HCT116 (cell line): ENCODE measurements at regions of chr17 and their contacts with region 1.

Region 1: GRCh38 chr17:76681222-76682137 is 29.3 kb downstream of the MXRA7 start:
- DNase-seq: peak; percentile 56
- ATAC-seq: peak; percentile 89
- H3K4me3 ChIP-seq: no peak overlapping the region
- H3K27ac ChIP-seq: no peak overlapping the region
- H3K4me1 ChIP-seq: no peaks in the 10 kb centered on the region
- H3K27me3 ChIP-seq: no peaks in the 10 kb centered on the region
- CTCF ChIP-seq: peak; percentile 90 to 99 (median 96)
- POLR2A ChIP-seq: no peak
- RAD21 ChIP-seq: peak; percentile 91

Region 2: GRCh38 chr17:76567634-76568432 is 113.6 kb before region 1 on chr17:
- CTCF ChIA-PET with region 1: interaction called, 10 read pairs
- POLR2A ChIA-PET with region 1: no interaction called
- RAD21 ChIA-PET with region 1: no interaction called
- intact Hi-C with region 1: no loop called
- DNase-seq: no peak
- ATAC-seq: peak; percentile 18
- H3K4me3 ChIP-seq: no peak overlapping the region
- H3K27ac ChIP-seq: no peak overlapping the region; the same call in 1 of the 2 replicates
- H3K4me1 ChIP-seq: peaks cover 0 to 25% of the 10 kb centered on the region in 2 experiments; a peak in 1 of 4 replicates
- H3K27me3 ChIP-seq: no peaks in the 10 kb centered on the region
- CTCF ChIP-seq: no peak
- POLR2A ChIP-seq: no peak
- RAD21 ChIP-seq: no peak

Region 3: GRCh38 chr17:76671123-76671911 is 10.2 kb before region 1 on chr17:
- CTCF ChIA-PET with region 1: interaction called, 33 read pairs
- POLR2A ChIA-PET with region 1: interaction called, 17 read pairs
- RAD21 ChIA-PET with region 1: interaction called in 1 of 2 experiments, 4 read pairs
- intact Hi-C with region 1: no loop called
- DNase-seq: peak; percentile 100
- ATAC-seq: peak; percentile 97
- H3K4me3 ChIP-seq: peak overlapping the region; percentile 80 to 82
- H3K27ac ChIP-seq: peak overlapping the region; percentile 79
- H3K4me1 ChIP-seq: peaks cover 21% of the 10 kb centered on the region in 2 experiments
- H3K27me3 ChIP-seq: no peaks in the 10 kb centered on the region
- CTCF ChIP-seq: no peak
- POLR2A ChIP-seq: peak; percentile 64
- RAD21 ChIP-seq: no peak

Region 4: GRCh38 chr17:76714822-76715495 is 33.5 kb after region 1 on chr17:
- CTCF ChIA-PET with region 1: interaction called, 12 read pairs
- POLR2A ChIA-PET with region 1: no interaction called
- RAD21 ChIA-PET with region 1: no interaction called
- intact Hi-C with region 1: no loop called
- DNase-seq: no peak
- ATAC-seq: peak; percentile 28
- H3K4me3 ChIP-seq: no peak overlapping the region
- H3K27ac ChIP-seq: 0 out of 2 replicates have a peak overlapping the region, but pooled peaks have one; percentile 0
- H3K4me1 ChIP-seq: peaks cover 9 to 14% of the 10 kb centered on the region in 2 experiments
- H3K27me3 ChIP-seq: no peaks in the 10 kb centered on the region
- CTCF ChIP-seq: peak; percentile 87 to 97 (median 88)
- POLR2A ChIP-seq: no peak
- RAD21 ChIP-seq: peak; percentile 83